Activated CD4-positive, alpha-beta T cell treated with anti-CD3 and anti-CD28 coated beads, Interleukin-2, amount 10 ng/mL, durations not matched to agents 24 days and 14 days (primary cell): ENCODE measurements at regions of chr6 and their contacts with region 1.

Region 1: DNA sequence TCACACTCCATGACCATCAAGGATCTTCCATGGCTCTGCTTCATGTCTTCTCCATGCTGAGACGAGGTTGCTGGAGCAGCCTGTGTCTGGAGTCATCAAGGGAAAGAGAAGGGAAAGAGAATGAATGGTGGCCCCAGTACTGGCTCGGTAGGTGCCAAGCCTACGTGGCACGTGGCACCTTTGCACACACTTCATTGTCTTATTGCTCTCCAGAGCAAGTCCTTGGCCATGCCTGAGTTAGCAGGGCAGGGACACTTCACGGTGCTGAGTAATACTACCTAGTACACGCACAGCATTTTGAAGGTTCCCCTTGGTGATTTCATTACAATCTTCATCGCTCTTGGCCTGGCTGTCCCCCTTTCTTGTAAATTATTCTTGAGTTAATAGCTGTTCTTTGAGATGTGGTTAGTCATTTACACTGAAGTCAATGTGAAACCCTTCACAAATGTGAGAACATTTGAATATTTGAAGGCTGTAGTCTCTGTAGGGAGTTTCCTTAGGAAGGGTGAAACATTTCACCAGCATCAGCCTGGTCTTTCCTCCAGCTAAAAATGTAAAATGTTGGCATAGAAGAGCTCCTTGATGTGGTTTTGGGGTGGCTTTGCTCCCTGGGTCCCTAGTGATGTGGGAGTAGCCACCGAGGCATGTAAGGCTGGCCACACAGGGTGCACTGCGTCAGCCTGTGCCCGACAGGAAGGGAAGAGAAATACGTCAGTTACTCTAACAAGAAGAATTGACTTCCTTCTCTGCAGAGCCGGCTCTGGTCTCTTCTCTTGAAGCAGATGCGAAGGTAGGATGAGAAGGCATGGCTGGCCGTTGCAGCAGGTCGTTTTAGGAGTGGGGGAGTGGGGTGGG is at the start of gene SYTL3:
- DNase-seq: peak; percentile 95
- H3K4me3 Mint-ChIP-seq: peak within 1 kb of the TSS; percentile 91
- H3K27ac Mint-ChIP-seq: peak within 1 kb of the TSS; percentile 94
- H3K4me1 Mint-ChIP-seq: peaks cover 77% of the 10 kb centered on the region
- H3K27me3 Mint-ChIP-seq: no peaks in the 10 kb centered on the region
- total RNA-seq, gene SYTL3: 102 and 106 TPM in 2 replicates

Region 2: GRCh38 chr6:157823001-157823527 is 826.5 kb before region 1 on chr6 and contains the start of gene SNX9:
- intact Hi-C with region 1: loop called (anchors 2 kb)
- DNase-seq: peak; percentile 89
- H3K4me3 Mint-ChIP-seq: peak within 1 kb of the TSS; percentile 95
- H3K27ac Mint-ChIP-seq: peak within 1 kb of the TSS; percentile 99
- H3K4me1 Mint-ChIP-seq: peaks cover 34% of the 10 kb centered on the region
- H3K27me3 Mint-ChIP-seq: peaks cover 34% of the 10 kb centered on the region
- total RNA-seq, gene SNX9: 33.7 and 34.0 TPM in 2 replicates

Region 3: GRCh38 chr6:158571826-158572652 is 77.5 kb before region 1 on chr6:
- intact Hi-C with region 1: loop called (anchors 2 kb)
- DNase-seq: no peak
- H3K4me3 Mint-ChIP-seq: no peak overlapping the region
- H3K27ac Mint-ChIP-seq: no peak overlapping the region
- H3K4me1 Mint-ChIP-seq: peaks cover 46% of the 10 kb centered on the region
- H3K27me3 Mint-ChIP-seq: no peaks in the 10 kb centered on the region

Region 4: GRCh38 chr6:158718461-158719046 is 69.0 kb after region 1 on chr6:
- intact Hi-C with region 1: loop called (anchors 2 kb)
- DNase-seq: no peak
- H3K4me3 Mint-ChIP-seq: no peak overlapping the region
- H3K27ac Mint-ChIP-seq: no peak overlapping the region
- H3K4me1 Mint-ChIP-seq: peaks cover 58% of the 10 kb centered on the region
- H3K27me3 Mint-ChIP-seq: no peaks in the 10 kb centered on the region

Region 5: GRCh38 chr6:158853072-158853871 is 203.8 kb after region 1 on chr6:
- intact Hi-C with region 1: loop called (anchors 1 kb)
- DNase-seq: peak; percentile 96
- H3K4me3 Mint-ChIP-seq: no peak overlapping the region
- H3K27ac Mint-ChIP-seq: no peak overlapping the region
- H3K4me1 Mint-ChIP-seq: peaks cover 32% of the 10 kb centered on the region
- H3K27me3 Mint-ChIP-seq: no peaks in the 10 kb centered on the region

Region 6: DNA sequence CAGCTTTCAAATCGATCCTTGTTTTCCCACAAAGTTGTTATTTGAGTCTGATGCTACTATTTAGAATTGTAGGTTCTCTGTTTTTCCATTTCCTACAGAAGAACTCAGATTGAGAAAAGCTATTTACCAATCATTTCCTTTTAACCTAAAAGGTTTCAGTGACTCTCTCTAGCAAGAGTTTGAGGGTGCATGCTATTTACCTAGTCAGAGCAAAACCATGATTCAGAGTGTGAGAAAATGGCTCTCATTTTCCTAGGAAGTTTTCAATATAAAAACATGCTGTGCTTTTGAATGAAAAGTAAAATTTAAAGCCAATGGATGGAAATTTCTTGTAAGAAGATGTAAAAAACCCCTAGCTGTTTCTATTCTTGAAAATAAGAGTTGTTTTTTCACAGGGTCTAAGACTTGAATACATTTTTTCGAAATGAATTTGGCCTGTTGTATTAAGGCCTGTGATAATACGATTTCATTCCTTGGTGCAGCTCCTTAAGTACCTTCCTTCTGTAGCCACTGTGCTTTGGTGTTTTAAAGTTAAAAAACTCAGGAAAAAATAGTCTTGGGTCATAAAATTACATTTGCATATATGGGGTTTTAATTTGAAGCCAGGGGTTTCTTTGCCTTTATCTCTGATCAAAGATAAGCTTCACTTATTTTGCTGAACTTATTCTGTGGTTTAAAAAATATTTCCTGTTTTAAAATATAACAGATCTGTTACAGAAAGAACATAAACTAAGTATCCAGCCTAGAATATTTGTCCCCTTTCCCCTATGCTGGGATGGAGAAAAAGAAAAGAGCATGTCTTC is 368.4 kb after region 1 on chr6:
- intact Hi-C with region 1: loop called (anchors 2 kb)
- DNase-seq: no peak
- H3K4me3 Mint-ChIP-seq: peak overlapping the region; percentile 45
- H3K27ac Mint-ChIP-seq: peak overlapping the region; percentile 79
- H3K4me1 Mint-ChIP-seq: peaks cover 42% of the 10 kb centered on the region
- H3K27me3 Mint-ChIP-seq: no peaks in the 10 kb centered on the region

Region 7: GRCh38 chr6:159098636-159099106 is 449.2 kb after region 1 on chr6:
- intact Hi-C with region 1: loop called (anchors 1 kb)
- DNase-seq: peak; percentile 90
- H3K4me3 Mint-ChIP-seq: peak overlapping the region; percentile 77
- H3K27ac Mint-ChIP-seq: peak overlapping the region; percentile 99
- H3K4me1 Mint-ChIP-seq: peaks cover 76% of the 10 kb centered on the region
- H3K27me3 Mint-ChIP-seq: no peaks in the 10 kb centered on the region